A549 (cell line): ENCODE measurements at regions of chr11 and their contacts with region 1.

Region 1: GRCh38 chr11:117426269-117426685 is 98.6 kb downstream of the CEP164 start:
- DNase-seq: peak; percentile 37 to 44
- ATAC-seq: peak in 1 of 2 experiments; percentile 88; a peak in 3 of 6 replicates
- H3K4me3 ChIP-seq: no peak overlapping the region
- H3K27ac ChIP-seq: no peak overlapping the region
- H3K4me1 ChIP-seq: no peaks in the 10 kb centered on the region
- CTCF ChIP-seq: peak; percentile 70
- EP300 ChIP-seq: no peak
- POLR2A ChIP-seq: no peak
- RAD21 ChIP-seq: peak; percentile 78 to 89

Region 2: GRCh38 chr11:116986521-116987105 is 439.7 kb before region 1 on chr11:
- CTCF ChIA-PET with region 1: no interaction called
- POLR2A ChIA-PET with region 1: no interaction called
- DNase-seq: no peak
- ATAC-seq: peak; percentile 71 to 75
- H3K4me3 ChIP-seq: no peak overlapping the region
- H3K27ac ChIP-seq: no peak overlapping the region
- H3K4me1 ChIP-seq: peaks cover 51% of the 10 kb centered on the region
- CTCF ChIP-seq: no peak
- EP300 ChIP-seq: no peak
- POLR2A ChIP-seq: no peak
- RAD21 ChIP-seq: no peak

Region 3: GRCh38 chr11:117239300-117239699 is 187.0 kb before region 1 on chr11:
- CTCF ChIA-PET with region 1: no interaction called
- POLR2A ChIA-PET with region 1: no interaction called
- DNase-seq: peak; percentile 37 to 71
- ATAC-seq: peak; percentile 97 to 98
- H3K4me3 ChIP-seq: no peak overlapping the region
- H3K27ac ChIP-seq: no peak overlapping the region
- H3K4me1 ChIP-seq: peaks cover 8% of the 10 kb centered on the region
- CTCF ChIP-seq: 0 out of 3 replicates have a peak, but pooled peaks have one; percentile 12
- EP300 ChIP-seq: no peak
- POLR2A ChIP-seq: no peak
- RAD21 ChIP-seq: no peak

Region 4: GRCh38 chr11:117443266-117444195 is 17.3 kb after region 1 on chr11:
- CTCF ChIA-PET with region 1: interaction called, 25 read pairs
- POLR2A ChIA-PET with region 1: no interaction called
- DNase-seq: peak; percentile 25 to 43
- ATAC-seq: peak; percentile 76 to 90; a peak in 5 of 6 replicates
- H3K4me3 ChIP-seq: no peak overlapping the region
- H3K27ac ChIP-seq: no peak overlapping the region
- H3K4me1 ChIP-seq: no peaks in the 10 kb centered on the region
- CTCF ChIP-seq: no peak
- EP300 ChIP-seq: no peak
- POLR2A ChIP-seq: no peak
- RAD21 ChIP-seq: peak; percentile 35 to 66; a peak in 3 of 5 replicates

Region 5: DNA sequence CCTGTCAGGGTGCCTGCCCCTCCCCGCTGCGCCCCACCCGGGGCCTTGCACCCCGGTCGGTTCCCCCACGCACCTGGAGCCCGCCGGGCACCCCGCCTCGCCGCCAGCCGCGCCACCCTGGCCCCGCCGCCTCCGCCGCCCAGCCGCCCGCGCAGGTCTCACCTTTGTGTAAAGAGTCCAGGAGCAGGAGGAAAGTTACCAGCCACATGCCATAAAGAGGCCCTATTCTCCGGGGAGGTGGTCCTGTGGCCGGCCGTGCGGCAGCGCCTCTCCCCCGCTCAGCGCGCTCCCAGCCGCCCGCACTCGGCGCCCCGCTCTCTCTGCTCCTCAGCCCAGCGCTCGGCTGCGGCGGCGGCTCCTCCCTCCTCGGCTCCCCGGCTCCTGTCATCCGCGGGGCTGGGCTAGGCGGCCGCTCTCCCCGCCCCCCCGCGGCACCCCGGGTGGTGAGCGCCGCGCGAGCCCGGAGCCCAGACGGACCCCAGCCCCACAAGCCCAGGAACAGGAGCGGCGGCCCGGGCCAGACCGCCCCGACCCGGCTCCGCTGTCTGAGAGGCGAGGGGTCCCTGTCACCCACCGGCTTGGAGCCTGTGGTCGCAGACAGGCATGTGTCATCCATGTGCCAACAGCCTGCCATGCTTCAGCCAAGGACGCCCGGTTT is 370.7 kb after region 1 on chr11 and contains the start of gene DSCAML1:
- CTCF ChIA-PET with region 1: interaction called, 22 read pairs
- POLR2A ChIA-PET with region 1: no interaction called
- DNase-seq: peak in 1 of 2 experiments; percentile 53
- ATAC-seq: peak; percentile 70 to 91; a peak in 5 of 6 replicates
- H3K4me3 ChIP-seq: peak within 1 kb of the TSS; percentile 49
- H3K27ac ChIP-seq: peak within 1 kb of the TSS in 1 of 2 experiments; percentile 65; a peak in 2 of 6 replicates
- H3K4me1 ChIP-seq: no peaks in the 10 kb centered on the region
- CTCF ChIP-seq: no peak
- EP300 ChIP-seq: no peak
- POLR2A ChIP-seq: no peak
- RAD21 ChIP-seq: no peak
- polyA plus RNA-seq, gene DSCAML1: 0.22 and 0.31 TPM in 2 replicates

Region 6: GRCh38 chr11:117817368-117818040 is 391.2 kb after region 1 on chr11:
- CTCF ChIA-PET with region 1: interaction called, 128 read pairs
- POLR2A ChIA-PET with region 1: interaction called, 5 read pairs
- DNase-seq: peak; percentile 58 to 70
- ATAC-seq: peak; percentile 48 to 81; a peak in 4 of 6 replicates
- H3K4me3 ChIP-seq: no peak overlapping the region
- H3K27ac ChIP-seq: peak overlapping the region; percentile 73 to 75; a peak in 5 of 6 replicates
- H3K4me1 ChIP-seq: peaks cover 41% of the 10 kb centered on the region
- CTCF ChIP-seq: peak; percentile 85
- EP300 ChIP-seq: no peak
- POLR2A ChIP-seq: no peak
- RAD21 ChIP-seq: peak; percentile 73 to 82